ENCODE measurements at regions of chr5 and their contacts with region 1.

Region 1: DNA sequence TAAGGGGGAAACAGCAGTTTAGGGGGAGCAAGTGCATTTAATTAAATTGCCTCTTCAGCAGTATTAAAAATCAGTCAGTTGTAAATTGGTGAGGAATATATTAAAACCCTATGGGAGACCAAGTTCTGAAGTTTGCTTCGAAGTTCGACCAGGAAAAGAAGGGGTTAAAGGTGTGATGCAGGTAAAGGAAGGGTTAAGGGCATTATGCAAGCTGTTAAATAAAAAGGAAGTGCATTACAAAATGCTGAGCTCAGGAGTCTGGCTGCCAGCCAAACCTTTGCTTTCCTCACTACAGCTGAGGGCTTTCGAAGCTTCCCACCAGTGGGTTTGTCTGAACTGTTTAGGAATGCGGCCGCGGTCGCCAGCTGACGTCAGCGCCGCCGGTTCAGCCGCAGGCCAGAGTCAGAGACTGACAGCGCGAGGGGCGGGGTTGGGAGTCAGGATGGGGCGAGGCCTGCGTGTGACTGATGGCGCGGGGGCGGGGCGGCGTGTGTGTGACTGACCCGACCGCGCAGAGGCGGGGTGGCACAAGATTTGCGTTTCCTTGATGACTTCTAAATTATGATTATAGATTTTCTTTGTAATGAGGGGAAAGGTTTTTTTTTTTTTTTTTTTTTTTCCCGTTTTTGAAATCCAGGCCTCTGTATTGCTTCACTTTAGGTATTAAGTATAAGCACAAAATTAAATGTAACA is 76.6 kb downstream of the ZSWIM6 start:
- DNase-seq: peak; percentile 99
- H3K4me3 ChIP-seq: peak overlapping the region; percentile 33
- H3K27ac ChIP-seq: peak overlapping the region; percentile 32
- H3K4me1 ChIP-seq: peaks cover 44% of the 10 kb centered on the region
- H3K27me3 ChIP-seq: no peaks in the 10 kb centered on the region
- CTCF ChIP-seq: no peak

Region 2: DNA sequence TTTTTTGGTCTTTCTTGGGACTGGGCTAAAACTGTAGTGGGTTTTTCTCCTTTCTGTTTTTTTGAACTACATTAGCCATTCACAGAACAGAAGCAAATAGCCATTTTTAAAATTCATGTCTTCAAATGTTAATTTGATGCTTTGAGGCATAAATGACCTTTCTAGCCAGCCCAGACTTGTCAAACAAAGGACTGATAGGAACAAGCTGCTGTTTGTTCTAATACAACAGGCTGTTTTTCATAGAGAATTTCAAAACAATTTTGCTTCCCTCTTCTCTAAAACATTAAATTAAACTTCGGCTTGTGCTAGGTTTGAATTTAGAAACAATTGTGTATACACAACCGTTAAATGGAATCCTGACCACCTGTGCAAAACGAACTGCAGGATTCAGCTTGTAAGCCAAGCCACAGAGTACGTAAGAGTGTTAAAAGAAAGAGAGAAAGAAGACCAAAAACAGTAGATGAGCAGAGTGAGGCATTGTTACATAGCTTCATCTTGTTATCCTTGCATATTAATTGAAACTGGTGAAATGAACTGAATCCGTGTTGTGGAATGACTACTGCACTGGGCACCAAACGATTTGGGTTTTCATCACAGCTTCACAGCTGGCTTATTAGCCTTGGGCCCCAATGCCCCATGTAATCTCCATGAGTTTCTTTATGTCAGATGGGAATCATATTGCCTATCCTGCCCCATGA is 23.4 kb after region 1 on chr5:
- CTCF ChIA-PET with region 1: interaction called, 10 read pairs
- POLR2A ChIA-PET with region 1: interaction called, 27 read pairs
- intact Hi-C with region 1: no loop called
- DNase-seq: no peak
- H3K4me3 ChIP-seq: no peak overlapping the region
- H3K27ac ChIP-seq: peak overlapping the region; percentile 27
- H3K4me1 ChIP-seq: peaks cover 14% of the 10 kb centered on the region
- H3K27me3 ChIP-seq: no peaks in the 10 kb centered on the region
- CTCF ChIP-seq: no peak

Region 3: GRCh38 chr5:61482980-61483379 is 74.4 kb after region 1 on chr5:
- CTCF ChIA-PET with region 1: no interaction called
- POLR2A ChIA-PET with region 1: interaction called, 10 read pairs
- intact Hi-C with region 1: no loop called
- DNase-seq: no peak
- H3K4me3 ChIP-seq: no peak overlapping the region
- H3K27ac ChIP-seq: no peak overlapping the region
- H3K4me1 ChIP-seq: peaks cover 19% of the 10 kb centered on the region
- H3K27me3 ChIP-seq: no peaks in the 10 kb centered on the region
- CTCF ChIP-seq: no peak

Region 4: DNA sequence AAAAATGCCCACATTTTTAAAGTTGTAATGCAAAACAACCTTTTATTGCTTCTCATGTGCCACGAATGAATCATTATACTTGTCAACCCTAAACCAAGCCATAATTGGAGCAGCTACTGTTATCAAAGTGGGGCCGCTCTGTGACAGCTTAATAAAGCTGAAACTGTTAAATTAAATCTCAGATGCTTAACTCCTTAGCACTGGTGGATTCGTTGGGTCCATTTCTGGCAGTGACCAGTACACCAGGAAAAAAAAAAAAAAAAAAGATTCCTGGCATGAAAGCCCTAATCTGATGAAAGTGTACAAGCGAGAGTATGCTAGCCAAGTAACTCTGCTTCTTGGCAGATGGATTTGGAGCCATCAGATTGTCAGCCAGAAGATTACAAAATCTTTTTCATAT is 88.2 kb after region 1 on chr5:
- CTCF ChIA-PET with region 1: no interaction called
- POLR2A ChIA-PET with region 1: no interaction called
- intact Hi-C with region 1: no loop called
- DNase-seq: no peak
- H3K4me3 ChIP-seq: no peak overlapping the region
- H3K27ac ChIP-seq: peak overlapping the region; percentile 3
- H3K4me1 ChIP-seq: peaks cover 38% of the 10 kb centered on the region
- H3K27me3 ChIP-seq: no peaks in the 10 kb centered on the region
- CTCF ChIP-seq: no peak

Measured in A673 (cell line).